IMR-90 (cell line): ENCODE measurements at regions of chr11 and their contacts with region 1.

Region 1: GRCh38 chr11:107549253-107549953 is 16.1 kb downstream of the ALKBH8 start:
- DNase-seq: peak; percentile 51
- ATAC-seq: peak; percentile 82
- H3K4me3 ChIP-seq: no peak overlapping the region
- H3K27ac ChIP-seq: no peak overlapping the region
- H3K4me1 ChIP-seq: no peaks in the 10 kb centered on the region
- H3K27me3 ChIP-seq: no peaks in the 10 kb centered on the region
- CTCF ChIP-seq: peak; percentile 87
- POLR2A ChIP-seq: no peak
- RAD21 ChIP-seq: peak; percentile 83

Region 2: GRCh38 chr11:107573438-107573837 is 24.0 kb after region 1 on chr11:
- CTCF ChIA-PET with region 1: interaction called, 4 read pairs
- POLR2A ChIA-PET with region 1: no interaction called
- dilution Hi-C with region 1: no loop called
- in situ Hi-C with region 1: no loop called
- intact Hi-C with region 1: loop called (anchors 2 kb)
- DNase-seq: no peak
- ATAC-seq: no peak
- H3K4me3 ChIP-seq: no peak overlapping the region
- H3K27ac ChIP-seq: no peak overlapping the region
- H3K4me1 ChIP-seq: no peaks in the 10 kb centered on the region
- H3K27me3 ChIP-seq: peaks cover 4% of the 10 kb centered on the region
- CTCF ChIP-seq: no peak
- POLR2A ChIP-seq: no peak
- RAD21 ChIP-seq: no peak

Region 3: DNA sequence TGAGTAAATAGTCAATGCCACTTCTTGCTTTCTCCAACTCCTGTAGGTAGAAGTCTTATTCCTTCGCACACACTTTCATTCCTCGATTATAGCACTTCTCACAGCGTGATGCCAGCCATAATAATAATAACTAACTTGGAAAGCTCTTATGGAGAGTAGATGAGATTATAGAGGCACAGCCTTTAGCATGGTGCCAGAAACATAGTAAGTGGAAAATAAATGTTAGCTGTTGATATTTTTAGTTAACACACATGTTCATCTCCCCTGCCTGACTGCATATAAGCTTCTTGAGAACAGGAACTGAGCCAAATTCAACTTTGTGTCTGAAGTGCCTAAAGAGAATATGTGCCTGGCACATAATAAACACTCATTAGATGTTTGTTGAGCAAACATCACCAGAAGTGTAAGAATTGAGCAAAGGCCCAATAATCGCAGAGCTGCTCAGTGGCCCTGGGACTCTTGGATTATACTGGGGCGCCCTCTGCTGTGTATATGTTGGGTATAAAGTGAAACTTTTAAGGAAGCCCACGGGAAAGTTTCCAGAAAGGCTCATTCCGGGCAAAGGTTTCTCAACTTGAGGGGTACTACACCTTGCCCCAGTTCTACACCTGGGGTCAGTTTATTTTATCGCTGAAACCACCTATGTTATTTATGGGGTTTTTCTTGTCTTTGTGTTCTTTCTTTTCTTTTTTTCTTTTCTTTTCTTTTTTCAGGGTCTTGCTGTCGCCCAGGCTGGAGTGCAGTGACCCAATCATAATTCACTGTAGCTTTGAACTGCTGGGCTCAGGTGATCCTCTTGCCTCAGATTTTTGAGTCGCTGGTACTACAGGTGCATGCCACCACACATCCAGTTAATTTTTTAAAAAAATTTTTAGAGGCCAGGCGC is 140.2 kb after region 1 on chr11:
- CTCF ChIA-PET with region 1: interaction called, 5 read pairs
- POLR2A ChIA-PET with region 1: no interaction called
- dilution Hi-C with region 1: no loop called
- in situ Hi-C with region 1: no loop called
- intact Hi-C with region 1: loop called (anchors 1 kb)
- DNase-seq: peak; percentile 51
- ATAC-seq: peak; percentile 90
- H3K4me3 ChIP-seq: no peak overlapping the region
- H3K27ac ChIP-seq: no peak overlapping the region
- H3K4me1 ChIP-seq: peaks cover 4% of the 10 kb centered on the region; the same call in 1 of the 2 replicates
- H3K27me3 ChIP-seq: no peaks in the 10 kb centered on the region
- CTCF ChIP-seq: peak; percentile 85
- POLR2A ChIP-seq: 0 out of 2 replicates have a peak, but pooled peaks have one; percentile 18
- RAD21 ChIP-seq: peak; percentile 89

Region 4: DNA sequence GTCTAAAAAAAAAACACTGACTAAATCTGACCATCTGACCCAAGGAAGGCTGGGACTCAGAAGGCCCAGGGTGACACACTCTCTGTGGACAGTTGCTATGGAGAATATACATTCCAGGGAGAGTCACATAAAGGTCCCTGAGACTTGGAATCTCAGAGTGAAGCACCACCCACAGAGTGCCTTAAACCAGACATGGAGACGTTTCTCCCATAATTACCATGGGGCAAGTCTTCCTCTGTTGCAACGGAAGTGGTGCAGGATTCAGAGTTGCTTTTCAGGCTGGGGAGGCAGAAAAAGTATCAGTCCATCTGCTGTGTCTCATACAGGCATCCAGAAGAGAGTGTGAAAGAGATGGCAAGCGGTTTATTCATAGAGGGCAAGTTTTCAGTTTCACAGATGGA is 221.1 kb after region 1 on chr11:
- CTCF ChIA-PET with region 1: interaction called, 5 read pairs
- POLR2A ChIA-PET with region 1: no interaction called
- dilution Hi-C with region 1: no loop called
- in situ Hi-C with region 1: no loop called
- intact Hi-C with region 1: loop called (anchors 1 kb)
- DNase-seq: peak; percentile 19
- ATAC-seq: peak; percentile 30
- H3K4me3 ChIP-seq: no peak overlapping the region
- H3K27ac ChIP-seq: no peak overlapping the region
- H3K4me1 ChIP-seq: peaks cover 4% of the 10 kb centered on the region
- H3K27me3 ChIP-seq: no peaks in the 10 kb centered on the region
- CTCF ChIP-seq: no peak
- POLR2A ChIP-seq: no peak
- RAD21 ChIP-seq: no peak

Region 5: DNA sequence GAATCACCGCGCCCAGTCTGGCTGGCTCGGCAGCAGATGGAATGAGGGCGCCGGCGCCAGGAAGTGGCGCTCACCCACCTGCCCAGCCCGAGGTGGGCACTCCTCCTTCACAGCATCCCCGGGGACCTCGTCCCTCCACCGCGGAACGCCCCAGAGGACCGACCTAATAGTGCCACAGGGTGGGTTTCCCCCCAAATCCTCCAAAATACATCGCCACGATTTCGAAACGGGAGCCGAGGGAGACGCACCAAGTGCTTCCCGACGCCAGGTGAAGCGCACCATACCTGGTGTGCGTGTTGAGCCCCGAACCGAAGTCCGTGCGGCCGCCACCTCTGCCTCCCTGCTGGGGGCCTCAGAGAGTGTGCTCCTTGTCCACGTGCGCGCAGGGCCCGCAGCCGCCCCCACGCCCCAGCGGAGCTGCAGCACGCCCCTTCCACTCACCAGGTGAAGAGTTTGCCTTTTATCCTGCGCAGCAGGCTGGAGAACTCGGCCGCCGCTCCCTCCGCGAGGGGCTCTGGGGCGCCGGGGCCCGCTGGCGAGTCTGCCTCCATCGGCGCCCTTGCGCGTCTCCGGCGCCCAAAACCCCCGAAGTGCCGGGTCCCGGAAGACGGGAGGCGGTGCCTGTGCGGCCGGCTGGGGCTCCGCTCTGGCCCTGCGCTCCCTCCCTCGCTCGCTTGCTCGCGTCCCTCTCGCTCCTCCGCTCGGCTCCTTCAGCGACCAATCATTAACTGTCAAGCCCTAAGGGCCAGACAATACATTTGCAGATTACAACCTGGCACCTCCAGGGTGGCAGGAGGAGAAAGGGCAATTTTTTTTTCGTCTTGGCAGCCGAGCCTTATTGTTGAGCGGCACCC is 309.0 kb after region 1 on chr11 and contains the start of gene SLC35F2:
- CTCF ChIA-PET with region 1: no interaction called
- POLR2A ChIA-PET with region 1: no interaction called
- dilution Hi-C with region 1: no loop called
- in situ Hi-C with region 1: no loop called
- intact Hi-C with region 1: loop called (anchors 1 kb)
- DNase-seq: peak; percentile 37
- ATAC-seq: peak; percentile 91
- H3K4me3 ChIP-seq: peak within 1 kb of the TSS; percentile 91
- H3K27ac ChIP-seq: no peak within 1 kb of the TSS; the same call in 1 of the 2 replicates
- H3K4me1 ChIP-seq: no peaks in the 10 kb centered on the region
- H3K27me3 ChIP-seq: peaks cover 4% of the 10 kb centered on the region
- CTCF ChIP-seq: no peak
- POLR2A ChIP-seq: no peak
- RAD21 ChIP-seq: no peak
- total RNA-seq, gene SLC35F2: 15.4 and 16.9 TPM in 2 replicates

Region 6: GRCh38 chr11:107898270-107898669 is 348.9 kb after region 1 on chr11:
- CTCF ChIA-PET with region 1: interaction called, 4 read pairs
- POLR2A ChIA-PET with region 1: no interaction called
- dilution Hi-C with region 1: no loop called
- in situ Hi-C with region 1: no loop called
- intact Hi-C with region 1: loop called (anchors 1 kb)
- DNase-seq: peak; percentile 63
- ATAC-seq: peak; percentile 91
- H3K4me3 ChIP-seq: no peak overlapping the region
- H3K27ac ChIP-seq: no peak overlapping the region
- H3K4me1 ChIP-seq: no peaks in the 10 kb centered on the region
- H3K27me3 ChIP-seq: 0 out of 2 replicates have a peak, but pooled peaks cover 2% of the 10 kb centered on the region
- CTCF ChIP-seq: peak; percentile 71
- POLR2A ChIP-seq: no peak
- RAD21 ChIP-seq: peak; percentile 74

Region 7: GRCh38 chr11:108609681-108610080 is 1060.3 kb after region 1 on chr11:
- CTCF ChIA-PET with region 1: no interaction called
- POLR2A ChIA-PET with region 1: no interaction called
- dilution Hi-C with region 1: no loop called
- in situ Hi-C with region 1: no loop called
- intact Hi-C with region 1: loop called (anchors 10 kb)
- DNase-seq: peak; percentile 35
- ATAC-seq: no peak; the same call in 1 of the 2 replicates
- H3K4me3 ChIP-seq: no peak overlapping the region
- H3K27ac ChIP-seq: no peak overlapping the region
- H3K4me1 ChIP-seq: no peaks in the 10 kb centered on the region; the same call in 1 of the 2 replicates
- H3K27me3 ChIP-seq: peaks cover 2% of the 10 kb centered on the region; the same call in 1 of the 2 replicates
- CTCF ChIP-seq: no peak
- POLR2A ChIP-seq: no peak
- RAD21 ChIP-seq: no peak